CD4-positive, alpha-beta memory T cell (primary cell): ENCODE measurements at regions of chr3 and their contacts with region 1.

Region 1: DNA sequence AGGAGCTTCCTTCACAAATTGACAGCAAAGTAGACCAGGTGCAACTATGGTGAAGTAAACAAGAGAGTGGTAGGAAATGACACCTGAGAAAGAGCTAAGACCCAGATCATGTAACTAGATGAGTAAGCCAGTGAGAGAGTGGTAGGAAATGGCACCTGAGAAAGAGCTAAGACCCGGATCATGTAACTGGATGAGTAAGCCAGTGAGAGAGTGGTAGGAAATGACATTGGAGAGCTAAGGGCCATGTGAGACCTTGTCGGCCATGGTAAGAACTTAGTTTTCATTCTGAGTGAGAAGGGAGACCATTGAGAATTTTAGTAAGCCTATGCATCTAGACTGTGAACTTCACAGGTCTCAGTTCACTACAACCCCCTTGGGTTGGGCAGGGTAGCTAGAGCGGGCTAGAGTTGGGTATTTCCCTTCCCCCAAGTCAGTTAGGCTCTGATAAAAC is 5.4 kb upstream of the SENP7 start:
- DNase-seq: peak; percentile 74 to 87 (median 82)
- H3K4me3 ChIP-seq: peak overlapping the region in 1 of 2 donors; percentile 14
- H3K4me3 Mint-ChIP-seq: peak overlapping the region; percentile 37 to 84 (median 60)
- H3K27ac ChIP-seq: peak overlapping the region; percentile 67
- H3K27ac Mint-ChIP-seq: peak overlapping the region; percentile 91 to 99 (median 96)
- H3K4me1 ChIP-seq: peaks cover 64% of the 10 kb centered on the region
- H3K4me1 Mint-ChIP-seq: peaks cover 36 to 66% (median 55%) of the 10 kb centered on the region in 4 donors
- H3K27me3 ChIP-seq: no peaks in the 10 kb centered on the region
- H3K27me3 Mint-ChIP-seq: no peaks in the 10 kb centered on the region

Region 2: DNA sequence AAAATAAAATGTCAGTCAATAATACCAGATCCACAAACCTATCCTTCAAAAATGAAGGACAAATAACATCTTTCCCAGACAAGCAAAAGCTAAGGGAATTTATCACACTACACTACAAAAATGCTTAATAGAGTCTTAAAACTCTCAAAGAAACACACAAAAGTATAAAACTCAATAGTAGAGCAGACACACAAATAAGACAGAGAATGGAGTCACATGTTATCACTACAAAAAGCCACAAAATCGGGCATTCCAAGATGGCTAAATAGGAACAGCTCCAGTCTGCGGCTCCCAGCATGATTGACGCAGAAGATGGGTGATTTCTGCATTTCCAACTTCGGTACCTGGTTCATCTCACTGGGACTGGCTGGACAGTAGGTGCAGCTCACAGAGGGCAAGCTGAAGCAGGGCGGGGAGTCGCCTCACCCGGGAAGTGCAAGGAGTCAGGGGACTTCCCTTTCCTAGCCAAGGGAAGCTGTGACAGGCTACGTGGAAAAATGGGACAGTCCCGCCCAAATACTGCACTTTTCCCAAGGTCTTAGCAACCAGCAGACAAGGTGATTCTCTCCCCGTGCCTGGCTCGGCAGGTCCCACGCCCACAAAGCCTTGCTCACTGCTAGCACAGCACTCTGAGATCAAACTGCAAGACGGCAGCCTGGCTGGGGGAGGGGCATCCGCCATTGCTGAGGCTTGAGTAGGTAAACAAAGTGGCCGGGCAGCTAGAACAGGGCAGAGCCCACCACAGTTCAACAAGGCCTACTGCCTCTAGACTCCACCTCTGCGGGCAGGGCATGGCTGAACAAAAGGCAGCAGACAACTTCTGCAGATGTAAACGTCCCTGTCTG is 51.8 kb before region 1 on chr3:
- CTCF ChIA-PET with region 1: no interaction called
- POLR2A ChIA-PET with region 1: interaction called, 4 read pairs
- intact Hi-C with region 1: loop called (anchors 5 kb)
- DNase-seq: peak in 4 of 5 donors; percentile 31 to 80 (median 44)
- H3K4me3 ChIP-seq: no peak overlapping the region
- H3K4me3 Mint-ChIP-seq: peak overlapping the region in 6 of 8 donors; percentile 52 to 87 (median 78)
- H3K27ac ChIP-seq: peak overlapping the region; percentile 32
- H3K27ac Mint-ChIP-seq: peak overlapping the region in 6 of 7 donors; percentile 79 to 96 (median 90)
- H3K4me1 ChIP-seq: peaks cover 22% of the 10 kb centered on the region
- H3K4me1 Mint-ChIP-seq: peaks cover 52 to 82% (median 63%) of the 10 kb centered on the region in 4 donors
- H3K27me3 ChIP-seq: no peaks in the 10 kb centered on the region
- H3K27me3 Mint-ChIP-seq: no peaks in the 10 kb centered on the region

Region 3: DNA sequence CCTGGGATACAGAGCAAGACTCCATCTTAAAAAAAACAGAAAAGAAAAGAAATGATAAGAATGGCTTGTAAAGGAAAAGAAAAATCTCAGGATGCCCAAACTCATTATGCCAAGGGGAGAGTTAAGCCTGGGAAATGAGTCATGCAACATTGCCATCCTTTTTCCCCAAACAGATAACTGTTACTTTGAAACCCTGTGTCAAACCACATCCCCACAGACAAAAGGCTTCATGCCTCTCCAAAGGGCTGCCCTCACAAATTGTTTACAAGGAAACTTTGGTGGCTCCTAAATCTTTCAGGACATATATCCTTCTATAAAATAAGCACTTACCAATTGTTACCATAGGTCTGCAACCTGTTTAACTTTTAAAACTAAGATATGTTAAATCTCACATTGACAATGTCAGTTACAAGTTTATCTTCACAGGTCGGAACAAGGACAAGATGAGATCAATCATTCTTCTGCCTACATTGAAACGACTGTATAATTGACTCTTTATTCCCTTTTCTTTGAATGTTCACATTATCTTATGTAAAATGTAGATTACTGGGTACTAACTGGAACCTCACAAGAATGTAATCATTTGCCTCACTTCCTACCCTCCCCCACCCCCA is 13.1 kb after region 1 on chr3:
- CTCF ChIA-PET with region 1: interaction called, 8 read pairs
- POLR2A ChIA-PET with region 1: interaction called, 32 read pairs
- intact Hi-C with region 1: loop called (anchors 1 kb)
- DNase-seq: peak in 2 of 5 donors; percentile 21 to 51
- H3K4me3 ChIP-seq: no peak overlapping the region
- H3K4me3 Mint-ChIP-seq: peak overlapping the region in 6 of 8 donors; percentile 9 to 72 (median 46)
- H3K27ac ChIP-seq: no peak overlapping the region
- H3K27ac Mint-ChIP-seq: peak overlapping the region; percentile 63 to 93 (median 89)
- H3K4me1 ChIP-seq: peaks cover 40% of the 10 kb centered on the region
- H3K4me1 Mint-ChIP-seq: peaks cover 35 to 42% (median 41%) of the 10 kb centered on the region in 4 donors
- H3K27me3 ChIP-seq: no peaks in the 10 kb centered on the region
- H3K27me3 Mint-ChIP-seq: no peaks in the 10 kb centered on the region

Region 4: DNA sequence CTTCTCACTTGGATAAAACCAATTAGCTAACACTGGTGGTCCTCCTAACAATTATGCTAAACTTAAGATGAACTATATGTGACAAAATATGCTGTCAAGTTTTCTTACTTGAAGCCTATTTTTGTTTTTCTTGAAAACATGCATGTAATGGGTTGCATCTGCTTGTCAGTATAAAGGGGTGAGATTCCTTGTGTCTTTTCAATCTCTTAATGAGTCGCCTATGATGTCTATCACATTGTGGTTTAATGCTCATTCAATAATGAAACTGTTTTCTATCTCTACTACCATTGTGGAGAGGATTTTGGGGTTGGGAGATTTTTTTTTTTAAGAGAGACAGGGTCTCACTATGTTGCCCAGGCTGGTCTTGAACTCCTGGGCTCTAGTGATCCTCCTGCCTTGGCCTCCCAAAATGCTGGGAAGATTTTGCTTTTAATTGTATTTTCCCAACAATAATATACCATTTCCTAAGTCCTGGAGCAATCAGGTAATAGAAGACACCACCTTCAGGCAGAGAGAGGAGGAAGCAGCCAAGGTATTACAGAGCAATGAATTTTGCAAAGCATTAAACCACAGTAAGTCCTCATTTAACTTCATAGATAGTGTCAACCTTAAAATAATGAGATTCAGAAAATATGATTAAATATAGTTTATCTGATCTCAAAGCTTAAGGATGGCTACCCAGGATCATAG is 25.9 kb after region 1 on chr3:
- CTCF ChIA-PET with region 1: interaction called, 19 read pairs
- POLR2A ChIA-PET with region 1: interaction called, 49 read pairs
- intact Hi-C with region 1: loop called (anchors 1 kb)
- DNase-seq: peak in 2 of 5 donors; percentile 18 to 22
- H3K4me3 ChIP-seq: no peak overlapping the region
- H3K4me3 Mint-ChIP-seq: peak overlapping the region in 7 of 8 donors; percentile 2 to 66 (median 23)
- H3K27ac ChIP-seq: no peak overlapping the region
- H3K27ac Mint-ChIP-seq: peak overlapping the region; percentile 48 to 94 (median 78)
- H3K4me1 ChIP-seq: peaks cover 34% of the 10 kb centered on the region
- H3K4me1 Mint-ChIP-seq: peaks cover 29 to 48% (median 37%) of the 10 kb centered on the region in 4 donors
- H3K27me3 ChIP-seq: no peaks in the 10 kb centered on the region
- H3K27me3 Mint-ChIP-seq: no peaks in the 10 kb centered on the region

Region 5: DNA sequence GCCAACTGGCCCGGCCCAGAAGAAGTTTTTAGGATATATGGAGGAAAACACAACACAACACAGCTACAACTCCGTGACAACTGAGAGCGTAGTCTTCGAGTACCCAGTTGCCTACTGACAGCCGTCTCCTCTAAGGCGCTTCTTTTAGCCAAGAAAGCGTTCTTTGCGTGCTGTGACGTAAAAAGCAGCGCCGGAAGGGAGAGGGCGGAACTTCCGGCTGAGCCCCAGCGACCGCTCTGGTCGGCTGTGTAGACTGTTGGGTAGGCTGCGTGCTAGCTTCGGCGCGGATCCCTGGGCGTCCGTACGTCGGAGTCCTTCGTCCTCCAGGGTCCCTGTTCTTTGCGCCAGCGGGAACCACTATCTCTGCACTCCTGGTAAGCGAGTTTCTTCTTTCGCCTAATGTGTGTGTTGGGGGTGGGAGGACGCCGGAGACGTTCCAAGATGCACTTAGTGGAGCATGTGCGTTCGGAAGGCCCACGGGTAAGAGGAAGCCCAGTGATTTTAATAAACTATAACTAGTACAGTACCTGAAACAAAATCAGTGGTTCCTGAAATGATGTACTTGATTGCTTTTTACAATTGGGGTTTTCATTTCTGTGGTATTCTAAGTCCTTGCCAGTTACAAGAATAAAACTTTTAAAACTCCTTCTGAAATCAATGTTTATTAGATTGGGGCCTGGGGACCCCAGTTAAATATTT is 43.3 kb after region 1 on chr3 and contains the start of gene TRMT10C:
- CTCF ChIA-PET with region 1: interaction called, 3 read pairs
- POLR2A ChIA-PET with region 1: interaction called, 34 read pairs
- intact Hi-C with region 1: loop called (anchors 1 kb)
- DNase-seq: peak; percentile 91 to 95 (median 93)
- H3K4me3 ChIP-seq: peak within 1 kb of the TSS; percentile 95 to 100
- H3K4me3 Mint-ChIP-seq: peak within 1 kb of the TSS; percentile 97 to 100 (median 99)
- H3K27ac ChIP-seq: peak within 1 kb of the TSS; percentile 79
- H3K27ac Mint-ChIP-seq: peak within 1 kb of the TSS; percentile 95 to 99 (median 99)
- H3K4me1 ChIP-seq: peaks cover 22% of the 10 kb centered on the region
- H3K4me1 Mint-ChIP-seq: peaks cover 13 to 41% (median 30%) of the 10 kb centered on the region in 4 donors
- H3K27me3 ChIP-seq: no peaks in the 10 kb centered on the region
- H3K27me3 Mint-ChIP-seq: peaks cover 4% of the 10 kb centered on the region in 2 donors
- total RNA-seq, gene TRMT10C: 23.3 to 24.8 TPM

Region 6: DNA sequence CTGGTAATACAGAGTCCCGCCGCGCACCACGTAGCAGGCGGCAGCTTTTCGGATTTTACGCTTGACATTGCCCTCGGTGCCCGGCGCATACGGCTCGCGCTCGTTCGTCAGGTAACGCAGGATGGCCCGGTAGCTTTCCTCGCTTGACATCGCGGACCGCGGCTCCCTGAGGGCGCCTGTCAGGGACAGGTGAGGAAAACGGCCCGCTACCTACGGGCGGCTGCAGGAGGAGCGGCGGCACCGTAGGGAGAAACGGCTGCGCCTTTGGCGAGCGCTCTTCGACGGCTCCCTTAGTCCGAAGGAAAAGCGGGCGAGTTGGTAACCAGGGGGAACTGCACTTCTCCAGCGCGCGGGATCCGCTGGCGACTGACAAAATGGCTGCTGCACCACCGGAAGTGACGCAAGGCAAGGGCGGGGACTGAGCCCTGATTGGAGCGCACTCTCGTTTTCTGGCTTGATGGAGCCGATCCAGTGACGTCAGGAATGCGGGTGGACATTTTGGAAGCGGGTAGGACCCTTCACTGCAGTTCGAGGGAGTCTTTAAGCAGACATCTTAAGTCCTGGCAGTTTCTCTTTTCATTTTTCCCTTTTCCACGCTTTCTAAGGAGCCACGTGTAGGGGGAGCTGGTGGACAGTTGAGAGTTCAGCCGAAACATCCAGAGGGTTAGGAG is 158.5 kb after region 1 on chr3 and contains the start of gene ZBTB11:
- CTCF ChIA-PET with region 1: no interaction called
- POLR2A ChIA-PET with region 1: interaction called, 18 read pairs
- intact Hi-C with region 1: loop called (anchors 2 kb)
- DNase-seq: peak; percentile 99 to 100 (median 99)
- H3K4me3 ChIP-seq: peak within 1 kb of the TSS; percentile 78 to 94
- H3K4me3 Mint-ChIP-seq: peak within 1 kb of the TSS; percentile 92 to 99 (median 96)
- H3K27ac ChIP-seq: peak within 1 kb of the TSS; percentile 98
- H3K27ac Mint-ChIP-seq: peak within 1 kb of the TSS; percentile 97 to 99 (median 98)
- H3K4me1 ChIP-seq: peaks cover 44% of the 10 kb centered on the region
- H3K4me1 Mint-ChIP-seq: peaks cover 23 to 73% (median 41%) of the 10 kb centered on the region in 4 donors
- H3K27me3 ChIP-seq: no peaks in the 10 kb centered on the region
- H3K27me3 Mint-ChIP-seq: peaks cover 0 to 2% of the 10 kb centered on the region in 2 donors
- total RNA-seq, gene ZBTB11: 48.9 to 50.8 TPM